ENCODE measurements at regions of chr17 and their contacts with region 1.

Region 1: DNA sequence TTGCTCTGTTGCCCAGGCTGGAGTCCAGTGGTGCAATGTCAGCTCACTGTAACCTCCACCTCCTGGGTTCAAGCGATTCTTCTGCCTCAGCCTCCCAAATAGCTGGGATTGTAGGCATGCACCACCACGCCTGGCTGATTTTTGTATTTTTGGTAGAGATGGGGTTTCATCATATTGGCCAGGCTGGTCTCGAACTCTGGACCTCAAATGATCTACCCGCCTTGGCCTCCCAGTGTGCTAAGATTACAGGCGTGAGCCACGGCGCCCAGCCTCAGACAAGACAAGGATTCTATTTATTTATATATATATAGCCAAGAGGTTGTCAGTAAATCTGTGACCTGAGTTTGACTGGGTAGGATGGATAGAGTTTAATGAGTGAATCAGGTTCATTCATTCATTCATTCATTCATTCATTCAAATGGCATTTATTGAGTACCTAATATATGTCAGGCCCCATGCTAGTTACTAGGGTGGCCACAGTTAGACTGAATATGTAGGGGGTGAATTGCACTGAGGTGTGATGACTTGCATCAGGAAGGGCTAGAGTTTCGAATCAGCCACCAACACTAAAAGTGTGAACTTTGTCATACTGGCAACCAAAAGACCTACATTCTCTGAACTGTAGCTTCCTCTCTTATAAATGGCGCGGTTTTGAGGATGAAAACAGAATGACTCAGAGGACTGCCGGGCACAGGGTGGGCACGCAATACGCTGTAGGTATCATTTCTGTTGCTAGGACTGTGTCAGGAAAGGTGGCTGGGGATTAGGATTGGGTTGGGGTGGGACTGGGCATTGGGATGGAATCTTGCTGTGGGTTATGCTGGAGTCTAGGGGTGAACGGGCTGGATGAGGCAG is 37.8 kb downstream of the ITGAE start:
- DNase-seq: no peak
- ATAC-seq: peak; percentile 54
- H3K4me3 Mint-ChIP-seq: peak overlapping the region; percentile 59
- H3K27ac Mint-ChIP-seq: peak overlapping the region; percentile 85
- H3K4me1 Mint-ChIP-seq: peaks cover 21% of the 10 kb centered on the region
- H3K27me3 Mint-ChIP-seq: no peaks in the 10 kb centered on the region
- CTCF ChIP-seq: no peak

Region 2: GRCh38 chr17:3796110-3796821 is 33.1 kb after region 1 on chr17:
- CTCF ChIA-PET with region 1: interaction called, 5 read pairs
- POLR2A ChIA-PET with region 1: interaction called, 8 read pairs
- intact Hi-C with region 1: loop called (anchors 1 kb)
- DNase-seq: peak; percentile 49
- ATAC-seq: peak; percentile 72
- H3K4me3 Mint-ChIP-seq: peak overlapping the region; percentile 9
- H3K27ac Mint-ChIP-seq: peak overlapping the region; percentile 79
- H3K4me1 Mint-ChIP-seq: peaks cover 58% of the 10 kb centered on the region
- H3K27me3 Mint-ChIP-seq: no peaks in the 10 kb centered on the region
- CTCF ChIP-seq: no peak

Region 3: GRCh38 chr17:3818786-3819185 is 55.6 kb after region 1 on chr17:
- CTCF ChIA-PET with region 1: interaction called, 3 read pairs
- POLR2A ChIA-PET with region 1: no interaction called
- intact Hi-C with region 1: loop called (anchors 2 kb)
- DNase-seq: no peak
- ATAC-seq: peak; percentile 65
- H3K4me3 Mint-ChIP-seq: no peak overlapping the region
- H3K27ac Mint-ChIP-seq: peak overlapping the region; percentile 65
- H3K4me1 Mint-ChIP-seq: peaks cover 29% of the 10 kb centered on the region
- H3K27me3 Mint-ChIP-seq: no peaks in the 10 kb centered on the region
- CTCF ChIP-seq: no peak

Measured in activated B cell treated with CpG ODN at 0.5 μM for 24 hours (primary cell).